CD4-positive, alpha-beta memory T cell (primary cell): ENCODE measurements at regions of chr18 and their contacts with region 1.

Region 1: GRCh38 chr18:12934454-12935071 is 13.2 kb upstream of the SEH1L start:
- DNase-seq: peak; percentile 71 to 76 (median 73)
- H3K4me3 ChIP-seq: no peak overlapping the region
- H3K4me3 Mint-ChIP-seq: peak overlapping the region in 2 of 8 donors; percentile 6 to 59
- H3K27ac ChIP-seq: no peak overlapping the region
- H3K27ac Mint-ChIP-seq: peak overlapping the region in 1 of 7 donors; percentile 32
- H3K4me1 ChIP-seq: peaks cover 5% of the 10 kb centered on the region
- H3K4me1 Mint-ChIP-seq: peaks cover 0 to 7% (median 4%) of the 10 kb centered on the region in 4 donors
- H3K27me3 ChIP-seq: no peaks in the 10 kb centered on the region
- H3K27me3 Mint-ChIP-seq: peaks cover 2 to 3% of the 10 kb centered on the region in 2 donors

Region 2: GRCh38 chr18:12391618-12392165 is 542.9 kb before region 1 on chr18:
- CTCF ChIA-PET with region 1: interaction called, 42 read pairs
- POLR2A ChIA-PET with region 1: no interaction called
- intact Hi-C with region 1: loop called (anchors 1 kb)
- DNase-seq: peak in 4 of 5 donors; percentile 45 to 52 (median 50)
- H3K4me3 ChIP-seq: no peak overlapping the region
- H3K4me3 Mint-ChIP-seq: no peak overlapping the region
- H3K27ac ChIP-seq: no peak overlapping the region
- H3K27ac Mint-ChIP-seq: no peak overlapping the region
- H3K4me1 ChIP-seq: no peaks in the 10 kb centered on the region
- H3K4me1 Mint-ChIP-seq: no peaks in the 10 kb centered on the region
- H3K27me3 ChIP-seq: no peaks in the 10 kb centered on the region
- H3K27me3 Mint-ChIP-seq: peaks cover 5 to 12% of the 10 kb centered on the region in 2 donors

Region 3: GRCh38 chr18:12726774-12727550 is 207.6 kb before region 1 on chr18:
- CTCF ChIA-PET with region 1: interaction called, 221 read pairs
- POLR2A ChIA-PET with region 1: interaction called, 5 read pairs
- intact Hi-C with region 1: loop called (anchors 1 kb)
- DNase-seq: peak; percentile 55 to 68 (median 62)
- H3K4me3 ChIP-seq: no peak overlapping the region
- H3K4me3 Mint-ChIP-seq: no peak overlapping the region
- H3K27ac ChIP-seq: no peak overlapping the region
- H3K27ac Mint-ChIP-seq: peak overlapping the region in 2 of 7 donors; percentile 9 to 82
- H3K4me1 ChIP-seq: no peaks in the 10 kb centered on the region
- H3K4me1 Mint-ChIP-seq: peaks cover 0 to 5% (median 1%) of the 10 kb centered on the region in 4 donors
- H3K27me3 ChIP-seq: no peaks in the 10 kb centered on the region
- H3K27me3 Mint-ChIP-seq: no peaks in the 10 kb centered on the region

Region 4: DNA sequence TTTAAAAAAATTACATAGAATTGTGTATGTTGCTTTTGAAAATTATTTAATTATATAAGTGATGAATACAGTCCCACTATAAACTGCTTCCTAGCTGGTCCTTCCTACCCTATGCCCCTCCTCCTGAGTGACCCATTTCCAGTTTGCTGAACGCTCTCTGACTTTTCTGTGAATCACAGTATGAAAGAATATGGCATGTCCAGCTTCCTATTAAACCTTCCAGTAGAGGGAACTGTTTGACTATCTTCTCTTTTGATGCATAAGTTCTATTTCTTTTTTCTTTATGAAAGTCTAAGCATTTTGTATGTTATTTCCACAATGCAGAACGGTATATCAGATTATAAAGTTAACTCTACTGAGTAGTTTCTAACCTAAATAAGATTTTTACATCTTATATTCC is 190.5 kb before region 1 on chr18:
- CTCF ChIA-PET with region 1: interaction called, 115 read pairs
- POLR2A ChIA-PET with region 1: no interaction called
- intact Hi-C with region 1: loop called (anchors 1 kb)
- DNase-seq: peak in 4 of 5 donors; percentile 33 to 43 (median 36)
- H3K4me3 ChIP-seq: no peak overlapping the region
- H3K4me3 Mint-ChIP-seq: no peak overlapping the region
- H3K27ac ChIP-seq: no peak overlapping the region
- H3K27ac Mint-ChIP-seq: no peak overlapping the region
- H3K4me1 ChIP-seq: no peaks in the 10 kb centered on the region
- H3K4me1 Mint-ChIP-seq: peaks cover 0 to 2% (median 0%) of the 10 kb centered on the region in 4 donors
- H3K27me3 ChIP-seq: no peaks in the 10 kb centered on the region
- H3K27me3 Mint-ChIP-seq: no peaks in the 10 kb centered on the region

Region 5: DNA sequence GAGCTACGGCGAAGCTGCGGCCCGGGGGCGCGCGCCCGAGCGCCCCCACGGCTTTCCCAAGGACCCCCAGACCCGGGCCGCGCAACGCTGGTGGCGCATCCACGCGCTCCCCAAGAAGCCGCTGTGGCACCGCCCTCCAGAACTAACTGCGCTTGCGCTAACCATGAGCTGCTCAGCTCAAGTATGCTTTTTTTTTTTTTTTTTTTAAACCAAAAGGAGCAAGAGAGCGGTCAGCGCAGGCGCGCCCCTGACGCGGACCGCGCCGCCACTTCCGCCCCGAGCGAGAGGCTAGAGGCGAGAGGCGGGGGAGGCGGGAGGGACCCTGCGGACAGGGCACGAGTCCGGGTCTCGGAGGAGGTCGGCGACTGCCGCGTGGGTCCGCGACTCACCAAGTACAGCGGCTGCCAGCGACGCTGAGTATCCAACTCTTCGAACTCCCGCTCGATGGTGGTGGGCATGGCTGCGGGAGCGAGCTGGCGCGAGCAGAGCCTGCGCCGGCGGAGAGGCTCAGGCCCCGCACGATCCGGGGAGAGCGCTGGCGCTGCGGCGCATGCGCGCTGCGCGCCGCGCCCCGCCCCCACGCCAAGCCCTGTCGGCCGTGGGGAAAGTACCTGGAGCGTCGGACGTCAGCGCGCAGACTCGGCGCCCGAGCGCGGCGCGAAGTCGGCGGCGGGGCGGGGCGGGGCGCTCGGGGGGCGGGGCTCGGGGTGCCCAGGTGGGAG is 50.7 kb before region 1 on chr18 and contains the start of gene PTPN2:
- CTCF ChIA-PET with region 1: interaction called, 69 read pairs
- POLR2A ChIA-PET with region 1: interaction called, 3 read pairs
- intact Hi-C with region 1: no loop called
- DNase-seq: peak; percentile 94 to 96 (median 95)
- H3K4me3 ChIP-seq: peak within 1 kb of the TSS; percentile 54 to 81
- H3K4me3 Mint-ChIP-seq: peak within 1 kb of the TSS; percentile 94 to 98 (median 96)
- H3K27ac ChIP-seq: peak within 1 kb of the TSS; percentile 100
- H3K27ac Mint-ChIP-seq: peak within 1 kb of the TSS; percentile 97 to 99 (median 98)
- H3K4me1 ChIP-seq: peaks cover 58% of the 10 kb centered on the region
- H3K4me1 Mint-ChIP-seq: peaks cover 50 to 63% (median 54%) of the 10 kb centered on the region in 4 donors
- H3K27me3 ChIP-seq: no peaks in the 10 kb centered on the region
- H3K27me3 Mint-ChIP-seq: no peaks in the 10 kb centered on the region
- total RNA-seq, gene PTPN2: 65.5 to 69.2 TPM

Region 6: GRCh38 chr18:12904012-12904516 is 30.5 kb before region 1 on chr18:
- CTCF ChIA-PET with region 1: interaction called, 22 read pairs
- POLR2A ChIA-PET with region 1: no interaction called
- intact Hi-C with region 1: no loop called
- DNase-seq: peak in 3 of 5 donors; percentile 24 to 45 (median 37)
- H3K4me3 ChIP-seq: no peak overlapping the region
- H3K4me3 Mint-ChIP-seq: peak overlapping the region; percentile 56 to 87 (median 80)
- H3K27ac ChIP-seq: no peak overlapping the region
- H3K27ac Mint-ChIP-seq: peak overlapping the region; percentile 71 to 96 (median 93)
- H3K4me1 ChIP-seq: peaks cover 14% of the 10 kb centered on the region
- H3K4me1 Mint-ChIP-seq: peaks cover 3 to 8% (median 7%) of the 10 kb centered on the region in 4 donors
- H3K27me3 ChIP-seq: no peaks in the 10 kb centered on the region
- H3K27me3 Mint-ChIP-seq: no peaks in the 10 kb centered on the region

Region 7: GRCh38 chr18:12921178-12921577 is 13.4 kb before region 1 on chr18:
- CTCF ChIA-PET with region 1: interaction called, 40 read pairs
- POLR2A ChIA-PET with region 1: interaction called, 7 read pairs
- intact Hi-C with region 1: no loop called
- DNase-seq: peak; percentile 22 to 50 (median 42)
- H3K4me3 ChIP-seq: peak overlapping the region in 1 of 2 donors; percentile 17
- H3K4me3 Mint-ChIP-seq: peak overlapping the region; percentile 60 to 75 (median 71)
- H3K27ac ChIP-seq: no peak overlapping the region
- H3K27ac Mint-ChIP-seq: peak overlapping the region; percentile 44 to 85 (median 62)
- H3K4me1 ChIP-seq: peaks cover 17% of the 10 kb centered on the region
- H3K4me1 Mint-ChIP-seq: peaks cover 13 to 24% (median 19%) of the 10 kb centered on the region in 4 donors
- H3K27me3 ChIP-seq: no peaks in the 10 kb centered on the region
- H3K27me3 Mint-ChIP-seq: no peaks in the 10 kb centered on the region

Region 8: GRCh38 chr18:13051950-13052349 is 117.4 kb after region 1 on chr18:
- CTCF ChIA-PET with region 1: no interaction called
- POLR2A ChIA-PET with region 1: no interaction called
- intact Hi-C with region 1: no loop called
- DNase-seq: no peak
- H3K4me3 ChIP-seq: no peak overlapping the region
- H3K4me3 Mint-ChIP-seq: peak overlapping the region in 2 of 8 donors; percentile 22 to 24
- H3K27ac ChIP-seq: no peak overlapping the region
- H3K27ac Mint-ChIP-seq: peak overlapping the region in 2 of 7 donors; percentile 54 to 69
- H3K4me1 ChIP-seq: no peaks in the 10 kb centered on the region
- H3K4me1 Mint-ChIP-seq: peaks cover 5 to 17% (median 15%) of the 10 kb centered on the region in 4 donors
- H3K27me3 ChIP-seq: no peaks in the 10 kb centered on the region
- H3K27me3 Mint-ChIP-seq: no peaks in the 10 kb centered on the region